ENCODE measurements at regions of chr6 and their contacts with region 1.

Region 1: GRCh38 chr6:80094017-80094416 is 12.5 kb upstream of the BCKDHB start:
- DNase-seq: no peak
- H3K4me3 ChIP-seq: no peak overlapping the region
- H3K27ac ChIP-seq: no peak overlapping the region
- H3K4me1 ChIP-seq: no peaks in the 10 kb centered on the region
- H3K27me3 ChIP-seq: no peaks in the 10 kb centered on the region
- CTCF ChIP-seq: peak; percentile 67

Region 2: GRCh38 chr6:79949233-79949632 is 144.8 kb before region 1 on chr6:
- CTCF ChIA-PET with region 1: no interaction called
- POLR2A ChIA-PET with region 1: no interaction called
- intact Hi-C with region 1: loop called (anchors 5 kb)
- DNase-seq: peak; percentile 8 to 48
- H3K4me3 ChIP-seq: no peak overlapping the region
- H3K27ac ChIP-seq: no peak overlapping the region
- H3K4me1 ChIP-seq: no peaks in the 10 kb centered on the region
- H3K27me3 ChIP-seq: no peaks in the 10 kb centered on the region
- CTCF ChIP-seq: peak; percentile 71

Region 3: GRCh38 chr6:80366714-80367113 is 272.7 kb after region 1 on chr6:
- CTCF ChIA-PET with region 1: no interaction called
- POLR2A ChIA-PET with region 1: no interaction called
- intact Hi-C with region 1: no loop called
- DNase-seq: no peak
- H3K4me3 ChIP-seq: no peak overlapping the region
- H3K27ac ChIP-seq: no peak overlapping the region
- H3K4me1 ChIP-seq: no peaks in the 10 kb centered on the region
- H3K27me3 ChIP-seq: no peaks in the 10 kb centered on the region
- CTCF ChIP-seq: no peak

Measured in PC-9 (cell line).